Right cardiac atrium (tissue), 5 donors: ENCODE measurements at regions of chr18 and their contacts with region 1.

Region 1: GRCh38 chr18:7272311-7273049 is 41.6 kb downstream of the LRRC30 start:
- DNase-seq: peak; percentile 76 to 85 (median 82)
- ATAC-seq: peak; percentile 77 to 85
- H3K4me3 ChIP-seq: no peak overlapping the region
- H3K27ac ChIP-seq: peak overlapping the region; percentile 66
- H3K4me1 ChIP-seq: peaks cover 7% of the 10 kb centered on the region
- H3K27me3 ChIP-seq: no peaks in the 10 kb centered on the region

Region 2: GRCh38 chr18:7370802-7371201 is 98.3 kb after region 1 on chr18:
- intact Hi-C with region 1: loop called in 1 of 4 experiments (anchors 5 kb)
- DNase-seq: peak; percentile 87 to 91 (median 89)
- ATAC-seq: peak; percentile 95 to 97
- H3K4me3 ChIP-seq: no peak overlapping the region
- H3K27ac ChIP-seq: no peak overlapping the region
- H3K4me1 ChIP-seq: peaks cover 4% of the 10 kb centered on the region
- H3K27me3 ChIP-seq: no peaks in the 10 kb centered on the region

Region 3: DNA sequence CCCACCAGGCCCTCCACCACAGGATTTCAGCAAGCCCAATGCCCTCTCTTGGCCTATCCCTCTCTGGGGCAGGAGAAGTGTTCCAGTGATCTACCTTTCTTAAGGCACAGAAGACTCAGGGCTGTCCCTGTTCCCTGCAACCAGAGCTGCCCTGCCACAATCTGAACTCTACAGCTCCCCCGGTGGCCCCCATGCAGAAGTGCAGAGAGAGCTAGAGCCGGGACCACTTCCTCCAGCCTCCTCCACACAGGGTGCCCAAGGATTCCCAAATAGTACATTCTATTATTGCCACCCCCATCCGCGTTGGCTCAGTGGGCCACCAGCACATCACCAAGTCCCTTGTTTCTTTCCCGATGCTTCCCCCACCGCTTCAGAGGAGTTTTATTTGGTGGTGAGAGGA is 179.9 kb after region 1 on chr18:
- intact Hi-C with region 1: loop called in 2 of 4 experiments (anchors 10 kb)
- DNase-seq: peak in 1 of 3 donors; percentile 29
- ATAC-seq: peak; percentile 59 to 82
- H3K4me3 ChIP-seq: no peak overlapping the region
- H3K27ac ChIP-seq: no peak overlapping the region
- H3K4me1 ChIP-seq: no peaks in the 10 kb centered on the region
- H3K27me3 ChIP-seq: no peaks in the 10 kb centered on the region

Region 4: DNA sequence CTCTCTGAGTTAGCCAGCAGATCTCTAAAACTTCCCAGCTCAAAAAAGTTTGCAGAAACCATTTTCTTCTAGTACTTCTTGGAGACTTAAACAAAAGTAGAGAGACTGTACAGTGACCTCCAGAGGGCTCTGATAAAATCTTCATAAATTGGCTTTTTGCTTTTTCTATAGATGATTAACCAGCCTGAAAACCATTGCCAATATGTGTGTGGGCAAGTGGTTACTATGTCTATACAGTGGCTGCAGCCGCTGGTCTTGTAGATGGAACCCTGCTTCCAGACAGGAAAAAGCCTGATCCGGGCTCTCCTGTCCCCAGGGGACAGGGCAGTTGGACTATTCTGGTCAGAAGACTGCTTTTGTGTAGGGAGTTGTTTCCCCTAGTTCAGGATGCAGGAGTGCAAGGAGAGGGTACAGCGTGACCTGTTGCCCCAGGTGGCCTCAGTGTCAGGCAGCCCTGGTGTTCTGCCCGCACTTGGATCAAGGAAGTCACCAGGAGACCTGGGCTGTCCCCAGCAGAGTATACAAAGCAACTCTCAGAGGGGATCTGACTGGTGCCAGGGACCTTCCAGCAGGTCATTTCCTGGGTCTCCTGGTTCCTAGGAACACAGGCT is 287.3 kb after region 1 on chr18:
- intact Hi-C with region 1: loop called in 2 of 4 experiments (anchors 2 to 10 kb)
- DNase-seq: no peak
- ATAC-seq: peak; percentile 35 to 49
- H3K4me3 ChIP-seq: no peak overlapping the region
- H3K27ac ChIP-seq: peak overlapping the region; percentile 27
- H3K4me1 ChIP-seq: peaks cover 2% of the 10 kb centered on the region
- H3K27me3 ChIP-seq: no peaks in the 10 kb centered on the region

Region 5: DNA sequence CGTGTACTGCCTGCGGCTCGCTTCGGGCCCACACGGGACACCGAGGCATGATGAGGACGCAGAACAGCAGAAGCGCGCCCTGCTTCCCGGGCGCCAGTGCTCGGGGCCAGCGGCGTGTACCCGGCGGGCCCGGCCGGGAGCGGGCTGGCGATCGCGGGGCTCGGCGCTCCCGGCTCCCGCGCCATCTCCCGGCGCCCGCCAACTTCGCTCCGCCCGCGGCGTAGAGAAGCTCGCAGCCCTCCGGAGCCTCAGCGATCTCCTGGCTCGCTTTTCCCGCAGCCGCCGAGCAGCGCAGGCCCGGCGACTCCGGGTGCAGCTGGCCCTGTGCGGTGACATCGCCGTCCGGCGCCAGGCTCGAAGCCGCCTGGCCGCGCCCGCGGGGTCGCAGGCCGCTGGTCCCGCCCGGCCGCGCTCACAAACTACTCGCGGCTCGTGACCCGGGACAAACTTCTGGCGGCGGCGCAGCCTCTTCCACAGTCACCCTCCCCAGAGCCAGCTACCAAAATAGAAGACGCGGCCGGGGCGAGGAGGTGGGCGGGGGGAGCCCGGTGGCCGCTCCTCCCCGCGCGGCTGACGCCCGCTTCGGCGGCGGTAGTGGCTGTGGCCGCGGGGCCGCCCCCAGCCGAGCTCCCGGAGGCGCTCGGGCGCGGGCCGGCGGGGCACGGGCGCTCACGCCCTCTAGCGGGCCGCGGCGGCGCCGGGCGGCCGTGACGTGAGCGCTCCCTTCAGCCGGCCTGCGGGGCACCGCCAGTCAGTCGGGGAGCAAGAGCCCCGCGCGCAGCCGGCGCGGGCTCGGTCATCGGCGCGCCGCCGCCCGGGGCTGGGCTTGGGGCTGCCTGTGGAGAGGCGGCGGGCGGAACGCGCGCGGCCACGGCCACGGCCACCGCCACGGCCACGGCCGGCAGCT is 294.3 kb after region 1 on chr18 and contains the start of gene PTPRM:
- intact Hi-C with region 1: loop called in 2 of 4 experiments (anchors 2 to 10 kb)
- DNase-seq: peak; percentile 93 to 97 (median 97)
- ATAC-seq: peak; percentile 93 to 96
- H3K4me3 ChIP-seq: peak within 1 kb of the TSS; percentile 84
- H3K27ac ChIP-seq: peak within 1 kb of the TSS; percentile 100
- H3K4me1 ChIP-seq: peaks cover 3% of the 10 kb centered on the region
- H3K27me3 ChIP-seq: no peaks in the 10 kb centered on the region
- total RNA-seq, gene PTPRM: 55.1 to 76.2 (median 62.9) TPM

Region 6: DNA sequence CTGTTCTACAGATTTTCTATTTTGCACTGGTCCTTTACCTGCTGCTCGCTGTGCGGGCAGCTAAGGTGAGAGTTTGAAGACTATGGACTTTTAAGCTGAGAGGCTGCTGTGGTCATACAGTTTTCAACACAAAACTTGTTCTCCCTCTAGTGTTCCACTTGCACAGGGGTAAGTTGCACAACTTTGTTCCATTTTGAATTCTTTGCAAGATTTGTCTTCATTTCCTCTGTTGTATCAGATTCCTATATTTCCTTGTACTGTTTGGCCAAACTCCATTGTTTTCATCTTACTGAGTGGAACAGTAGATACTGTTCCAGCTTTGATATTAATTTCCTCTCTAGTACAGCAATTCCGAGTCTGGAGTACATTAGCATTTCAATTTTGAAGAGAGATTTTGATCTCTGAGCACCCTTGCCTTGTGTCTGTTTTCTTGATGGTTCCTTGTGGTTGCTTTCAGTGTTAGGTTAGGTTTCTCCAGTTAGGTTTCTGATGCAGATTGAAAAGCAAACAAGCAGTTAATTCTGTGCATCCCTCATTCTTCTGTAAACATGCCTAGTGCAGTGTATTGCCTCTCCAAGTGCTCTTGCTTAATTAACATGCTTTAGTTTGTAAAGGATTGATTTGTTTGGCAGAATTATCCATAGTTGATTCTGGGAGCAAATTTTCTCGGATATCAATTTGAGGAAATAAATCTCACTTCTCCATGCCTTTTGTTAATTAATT is 483.4 kb after region 1 on chr18:
- intact Hi-C with region 1: loop called in 1 of 4 experiments (anchors 10 kb)
- DNase-seq: no peak
- ATAC-seq: peak; percentile 63 to 77
- H3K4me3 ChIP-seq: no peak overlapping the region
- H3K27ac ChIP-seq: no peak overlapping the region
- H3K4me1 ChIP-seq: peaks cover 15% of the 10 kb centered on the region
- H3K27me3 ChIP-seq: no peaks in the 10 kb centered on the region

Region 7: GRCh38 chr18:8478166-8478967 is 1205.9 kb after region 1 on chr18:
- intact Hi-C with region 1: loop called in 3 of 4 experiments (anchors 5 to 10 kb)
- DNase-seq: peak; percentile 56 to 80 (median 80)
- ATAC-seq: peak; percentile 50 to 69
- H3K4me3 ChIP-seq: no peak overlapping the region
- H3K27ac ChIP-seq: no peak overlapping the region
- H3K4me1 ChIP-seq: no peaks in the 10 kb centered on the region
- H3K27me3 ChIP-seq: no peaks in the 10 kb centered on the region